HCT116 (cell line): ENCODE measurements at regions of chr11 and their contacts with region 1.

Region 1: DNA sequence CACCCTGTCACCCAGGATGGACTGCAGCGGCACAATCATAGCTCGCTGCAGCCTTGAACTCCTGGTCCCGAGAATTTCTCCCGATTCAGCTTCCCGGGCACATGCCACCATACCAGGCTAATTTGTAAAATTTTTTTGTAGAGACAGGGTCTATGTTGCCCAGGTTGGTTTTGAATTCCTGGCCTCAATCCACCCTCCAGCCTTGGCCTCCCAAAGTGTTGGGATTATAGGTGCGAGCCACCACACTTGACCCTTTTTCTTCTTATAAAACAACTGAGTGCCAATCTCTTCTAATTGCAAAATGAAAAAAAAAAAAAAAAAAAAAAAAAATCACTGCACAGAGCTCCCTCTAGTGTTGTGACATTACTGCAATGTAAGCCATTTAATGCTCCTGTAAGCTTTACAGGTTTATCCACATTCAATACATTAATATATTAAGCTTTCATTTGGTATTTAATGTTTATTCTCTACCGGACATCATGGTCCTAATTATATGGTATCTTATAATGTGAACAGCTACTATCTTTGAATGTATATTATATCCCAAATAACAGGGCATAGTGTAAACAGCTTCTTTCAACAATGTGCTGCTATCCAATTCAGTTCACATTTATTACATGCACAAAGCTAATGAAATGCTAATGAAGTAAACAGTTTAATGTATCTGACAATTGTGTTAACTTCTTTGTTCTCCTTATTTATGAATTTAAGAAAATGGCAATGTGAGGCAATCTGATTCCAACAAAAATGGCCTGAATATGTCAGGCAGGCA is 44.6 kb downstream of the COPB1 start:
- DNase-seq: no peak
- ATAC-seq: peak; percentile 63
- H3K4me3 ChIP-seq: no peak overlapping the region
- H3K27ac ChIP-seq: no peak overlapping the region
- H3K4me1 ChIP-seq: no peaks in the 10 kb centered on the region
- H3K27me3 ChIP-seq: no peaks in the 10 kb centered on the region
- CTCF ChIP-seq: peak; percentile 51 to 80 (median 57); a peak in 5 of 6 replicates
- POLR2A ChIP-seq: no peak
- RAD21 ChIP-seq: peak; percentile 58

Region 2: DNA sequence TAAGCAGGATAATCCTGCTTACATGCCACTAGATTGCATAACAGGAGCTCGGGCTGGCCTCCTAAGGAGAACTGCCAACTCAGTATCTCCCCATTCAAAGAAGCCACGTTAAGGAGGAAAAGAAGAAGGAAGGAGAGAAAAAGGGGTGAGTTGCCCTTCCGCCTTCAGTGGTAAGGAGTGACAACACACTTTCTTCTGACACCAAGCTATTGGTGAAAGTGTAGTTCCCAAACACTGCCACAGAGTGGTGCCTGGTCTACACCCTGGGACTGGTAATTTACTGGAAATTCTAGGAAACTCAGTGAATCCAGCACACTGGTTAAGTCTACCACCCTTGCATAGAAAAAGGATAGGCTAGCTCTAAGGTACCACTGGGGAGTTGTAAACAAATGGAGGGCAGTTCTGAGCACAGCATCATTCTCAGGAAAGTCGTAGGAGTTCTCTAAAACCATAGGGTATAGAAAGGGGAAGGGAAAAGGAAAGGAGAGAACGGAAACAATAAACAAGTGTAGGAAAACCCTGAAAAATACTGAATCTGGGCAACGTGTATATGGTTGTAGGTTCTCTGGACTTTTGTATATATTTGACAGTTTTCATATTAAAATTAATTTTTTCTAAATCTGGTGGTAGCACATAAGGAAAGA is 154.3 kb before region 1 on chr11:
- CTCF ChIA-PET with region 1: interaction called, 71 read pairs
- POLR2A ChIA-PET with region 1: interaction called, 7 read pairs
- RAD21 ChIA-PET with region 1: interaction called, 18 to 19 read pairs
- intact Hi-C with region 1: loop called (anchors 1 kb)
- DNase-seq: peak; percentile 42
- ATAC-seq: peak; percentile 97
- H3K4me3 ChIP-seq: no peak overlapping the region
- H3K27ac ChIP-seq: no peak overlapping the region
- H3K4me1 ChIP-seq: no peaks in the 10 kb centered on the region
- H3K27me3 ChIP-seq: no peaks in the 10 kb centered on the region
- CTCF ChIP-seq: peak; percentile 73 to 79 (median 77); a peak in 5 of 6 replicates
- POLR2A ChIP-seq: no peak
- RAD21 ChIP-seq: peak; percentile 88

Region 3: DNA sequence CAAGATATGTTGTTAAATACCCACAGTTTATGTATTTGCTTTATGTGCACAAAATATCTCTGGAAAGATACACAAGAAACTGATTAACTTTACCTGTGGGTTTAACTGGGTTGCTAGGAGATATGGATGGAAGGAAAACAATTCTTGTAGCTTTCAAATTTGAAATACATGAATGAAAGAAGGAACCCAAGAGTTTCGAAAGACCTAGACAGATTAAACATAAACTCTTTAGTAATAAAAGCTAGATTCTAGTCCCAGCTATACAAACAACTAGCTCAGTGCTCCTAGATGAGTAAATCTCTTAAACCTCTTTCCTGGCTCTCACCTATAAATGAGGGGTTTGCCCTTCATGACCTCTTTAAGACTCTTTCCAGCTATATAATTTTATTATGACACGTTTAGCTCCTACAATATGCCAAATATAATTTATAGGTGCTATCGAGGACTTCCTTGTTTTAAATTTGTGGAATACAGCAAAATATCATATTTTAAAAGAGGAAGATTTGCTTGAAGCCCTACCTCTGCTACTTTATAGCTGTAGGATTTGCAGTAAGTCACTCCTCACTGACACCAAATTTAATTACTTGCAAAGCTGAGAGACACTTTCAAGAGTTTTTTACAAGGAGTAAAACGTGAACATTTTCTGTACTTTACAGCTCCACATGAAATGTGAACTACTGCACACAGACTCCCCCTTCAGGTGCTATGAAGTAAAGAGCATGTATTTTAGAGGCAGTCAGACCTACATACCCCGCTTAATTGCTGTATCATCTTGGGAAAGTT is 146.7 kb before region 1 on chr11:
- CTCF ChIA-PET with region 1: interaction called, 71 read pairs
- POLR2A ChIA-PET with region 1: no interaction called
- RAD21 ChIA-PET with region 1: no interaction called
- intact Hi-C with region 1: no loop called
- DNase-seq: peak; percentile 12
- ATAC-seq: peak; percentile 87
- H3K4me3 ChIP-seq: no peak overlapping the region
- H3K27ac ChIP-seq: no peak overlapping the region
- H3K4me1 ChIP-seq: peaks cover 0 to 5% of the 10 kb centered on the region in 2 experiments; a peak in 1 of 4 replicates
- H3K27me3 ChIP-seq: no peaks in the 10 kb centered on the region
- CTCF ChIP-seq: peak; percentile 14 to 65 (median 61); a peak in 4 of 6 replicates
- POLR2A ChIP-seq: no peak
- RAD21 ChIP-seq: peak; percentile 16; the same call in 1 of the 2 replicates

Region 4: GRCh38 chr11:14413307-14414069 is 41.6 kb before region 1 on chr11:
- CTCF ChIA-PET with region 1: interaction called, 12 read pairs
- POLR2A ChIA-PET with region 1: no interaction called
- RAD21 ChIA-PET with region 1: no interaction called
- intact Hi-C with region 1: no loop called
- DNase-seq: no peak
- ATAC-seq: peak; percentile 64
- H3K4me3 ChIP-seq: no peak overlapping the region
- H3K27ac ChIP-seq: no peak overlapping the region
- H3K4me1 ChIP-seq: peaks cover 0 to 6% of the 10 kb centered on the region in 2 experiments; a peak in 2 of 4 replicates
- H3K27me3 ChIP-seq: no peaks in the 10 kb centered on the region
- CTCF ChIP-seq: peak in 2 of 3 experiments; percentile 48 to 50; a peak in 3 of 6 replicates
- POLR2A ChIP-seq: no peak
- RAD21 ChIP-seq: no peak

Region 5: GRCh38 chr11:14418803-14419417 is 36.1 kb before region 1 on chr11:
- CTCF ChIA-PET with region 1: interaction called, 12 read pairs
- POLR2A ChIA-PET with region 1: no interaction called
- RAD21 ChIA-PET with region 1: no interaction called
- intact Hi-C with region 1: no loop called
- DNase-seq: peak; percentile 48
- ATAC-seq: peak; percentile 77
- H3K4me3 ChIP-seq: no peak overlapping the region
- H3K27ac ChIP-seq: no peak overlapping the region
- H3K4me1 ChIP-seq: peaks cover 14 to 36% of the 10 kb centered on the region in 2 experiments
- H3K27me3 ChIP-seq: no peaks in the 10 kb centered on the region
- CTCF ChIP-seq: peak; percentile 66 to 75 (median 74); a peak in 5 of 6 replicates
- POLR2A ChIP-seq: no peak
- RAD21 ChIP-seq: peak; percentile 76

Region 6: DNA sequence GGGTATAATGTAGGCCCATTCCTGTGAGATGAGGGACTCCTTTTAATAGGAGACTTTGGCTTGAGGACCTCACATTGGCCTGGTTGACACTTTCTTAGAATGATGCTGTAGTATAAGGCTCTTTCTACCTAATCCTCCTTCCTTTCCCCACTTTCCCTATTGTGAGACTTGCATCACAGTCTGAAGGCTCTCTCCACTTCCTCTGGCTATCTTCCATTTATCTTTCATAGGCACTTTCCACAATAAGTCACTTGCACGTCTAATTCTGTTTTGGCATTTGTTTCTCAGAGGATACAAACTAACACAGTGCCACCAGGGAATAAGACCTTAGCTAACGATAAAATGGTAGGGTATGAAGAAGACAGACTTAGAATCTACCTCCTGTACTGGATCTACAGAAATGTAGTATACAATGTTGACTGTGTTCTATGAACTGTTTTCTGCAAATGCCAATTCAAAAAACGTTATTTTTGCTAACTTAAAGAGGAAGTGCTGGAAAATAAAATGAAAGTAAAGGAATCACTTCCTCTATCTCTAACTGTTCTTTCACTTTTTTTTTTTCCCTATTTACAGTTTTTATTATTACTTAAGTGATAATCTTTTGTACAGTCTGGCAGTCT is 170.6 kb after region 1 on chr11:
- CTCF ChIA-PET with region 1: no interaction called
- POLR2A ChIA-PET with region 1: no interaction called
- RAD21 ChIA-PET with region 1: no interaction called
- intact Hi-C with region 1: no loop called
- DNase-seq: no peak
- ATAC-seq: no peak
- H3K4me3 ChIP-seq: no peak overlapping the region
- H3K27ac ChIP-seq: no peak overlapping the region
- H3K4me1 ChIP-seq: no peaks in the 10 kb centered on the region
- H3K27me3 ChIP-seq: no peaks in the 10 kb centered on the region
- CTCF ChIP-seq: no peak
- POLR2A ChIP-seq: no peak
- RAD21 ChIP-seq: no peak

Region 7: GRCh38 chr11:14784230-14784629 is 329.2 kb after region 1 on chr11:
- CTCF ChIA-PET with region 1: no interaction called
- POLR2A ChIA-PET with region 1: no interaction called
- RAD21 ChIA-PET with region 1: no interaction called
- intact Hi-C with region 1: no loop called
- DNase-seq: no peak
- ATAC-seq: no peak
- H3K4me3 ChIP-seq: no peak overlapping the region
- H3K27ac ChIP-seq: no peak overlapping the region
- H3K4me1 ChIP-seq: no peaks in the 10 kb centered on the region
- H3K27me3 ChIP-seq: no peaks in the 10 kb centered on the region
- CTCF ChIP-seq: no peak
- POLR2A ChIP-seq: no peak
- RAD21 ChIP-seq: no peak